Posterior cingulate gyrus (tissue), 11 donors: ENCODE measurements at regions of chr12 and their contacts with region 1.

Region 1: GRCh38 chr12:103379670-103380069 is 116.1 kb downstream of the C12orf42 start:
- DNase-seq: no peak

Region 2: DNA sequence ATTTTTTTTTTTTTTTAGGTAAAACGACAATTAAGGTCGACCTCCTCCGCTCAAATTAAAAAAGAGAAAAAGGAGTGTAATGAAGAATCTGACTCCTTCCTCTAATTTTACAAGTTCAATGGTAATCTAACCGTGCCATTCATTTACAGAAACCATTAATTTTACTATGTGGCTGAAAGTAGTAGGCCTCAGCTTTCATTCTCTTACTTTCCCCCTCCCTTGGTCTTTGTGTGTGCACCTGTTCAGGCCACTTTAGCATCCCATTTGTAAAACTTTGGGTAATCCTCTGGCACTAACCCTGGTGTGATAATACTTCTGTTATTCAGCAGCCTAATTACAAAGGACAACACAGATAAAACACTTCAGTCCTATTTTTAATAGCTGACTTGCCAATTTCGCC is 294.1 kb before region 1 on chr12:
- intact Hi-C with region 1: loop called (anchors 5 kb)
- DNase-seq: no peak

Region 3: GRCh38 chr12:103348935-103349334 is 30.7 kb before region 1 on chr12:
- intact Hi-C with region 1: no loop called
- DNase-seq: no peak

Region 4: GRCh38 chr12:103680591-103681141 is 301.0 kb after region 1 on chr12:
- intact Hi-C with region 1: no loop called
- DNase-seq: peak in 8 of 10 donors; percentile 28 to 93 (median 60)